PC-3 (cell line): ENCODE measurements at regions of chr14 and their contacts with region 1.

Region 1: GRCh38 chr14:53953002-53953827 is 3.4 kb downstream of the BMP4 start:
- DNase-seq: peak; percentile 88
- ATAC-seq: peak; percentile 75
- H3K4me3 ChIP-seq: peak overlapping the region; percentile 91
- H3K27ac ChIP-seq: peak overlapping the region; percentile 31; the same call in 1 of the 2 replicates
- H3K4me1 ChIP-seq: 0 out of 2 replicates have a peak, but pooled peaks cover 4% of the 10 kb centered on the region
- H3K27me3 ChIP-seq: no peaks in the 10 kb centered on the region
- CTCF ChIP-seq: no peak

Region 2: GRCh38 chr14:53368711-53369191 is 584.5 kb before region 1 on chr14:
- CTCF ChIA-PET with region 1: interaction called, 5 read pairs
- POLR2A ChIA-PET with region 1: interaction called, 14 read pairs
- intact Hi-C with region 1: no loop called
- DNase-seq: peak; percentile 70
- ATAC-seq: peak; percentile 81
- H3K4me3 ChIP-seq: no peak overlapping the region
- H3K27ac ChIP-seq: peak overlapping the region; percentile 14; the same call in 1 of the 2 replicates
- H3K4me1 ChIP-seq: peaks cover 35% of the 10 kb centered on the region
- H3K27me3 ChIP-seq: no peaks in the 10 kb centered on the region
- CTCF ChIP-seq: no peak

Region 3: DNA sequence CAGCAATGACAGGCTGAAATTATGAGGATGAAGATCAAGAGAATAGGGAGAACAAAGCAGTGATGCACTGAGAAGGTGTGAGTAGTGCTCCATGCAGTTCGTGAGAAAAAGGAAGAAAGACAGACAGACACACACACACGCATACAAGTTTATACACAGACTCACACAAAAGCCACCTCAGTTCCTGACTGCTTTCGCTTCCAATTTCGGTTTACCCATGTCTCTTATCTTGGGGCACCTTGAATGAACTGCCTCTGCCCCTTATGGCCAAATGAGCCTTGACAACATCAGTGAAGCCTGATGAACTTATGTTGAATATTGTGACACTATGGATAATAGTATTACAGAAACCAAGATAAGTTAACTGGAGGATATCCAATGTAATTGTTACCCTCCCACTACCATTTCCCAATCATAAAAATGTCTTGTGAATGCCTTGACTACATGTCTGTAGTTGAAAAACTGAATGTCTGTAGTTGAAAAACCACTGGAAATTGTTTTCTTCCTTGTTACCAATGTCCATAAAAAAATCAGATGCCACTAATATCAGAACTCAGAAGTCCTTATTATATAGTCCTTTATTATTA is 419.7 kb before region 1 on chr14:
- CTCF ChIA-PET with region 1: no interaction called
- POLR2A ChIA-PET with region 1: interaction called, 11 read pairs
- intact Hi-C with region 1: no loop called
- DNase-seq: no peak
- ATAC-seq: no peak
- H3K4me3 ChIP-seq: no peak overlapping the region
- H3K27ac ChIP-seq: peak overlapping the region; percentile 94
- H3K4me1 ChIP-seq: peaks cover 35% of the 10 kb centered on the region
- H3K27me3 ChIP-seq: no peaks in the 10 kb centered on the region
- CTCF ChIP-seq: no peak

Region 4: GRCh38 chr14:53569446-53569845 is 383.8 kb before region 1 on chr14:
- CTCF ChIA-PET with region 1: no interaction called
- POLR2A ChIA-PET with region 1: interaction called, 10 read pairs
- intact Hi-C with region 1: no loop called
- DNase-seq: no peak
- ATAC-seq: no peak
- H3K4me3 ChIP-seq: no peak overlapping the region
- H3K27ac ChIP-seq: no peak overlapping the region
- H3K4me1 ChIP-seq: no peaks in the 10 kb centered on the region
- H3K27me3 ChIP-seq: no peaks in the 10 kb centered on the region
- CTCF ChIP-seq: no peak

Region 5: DNA sequence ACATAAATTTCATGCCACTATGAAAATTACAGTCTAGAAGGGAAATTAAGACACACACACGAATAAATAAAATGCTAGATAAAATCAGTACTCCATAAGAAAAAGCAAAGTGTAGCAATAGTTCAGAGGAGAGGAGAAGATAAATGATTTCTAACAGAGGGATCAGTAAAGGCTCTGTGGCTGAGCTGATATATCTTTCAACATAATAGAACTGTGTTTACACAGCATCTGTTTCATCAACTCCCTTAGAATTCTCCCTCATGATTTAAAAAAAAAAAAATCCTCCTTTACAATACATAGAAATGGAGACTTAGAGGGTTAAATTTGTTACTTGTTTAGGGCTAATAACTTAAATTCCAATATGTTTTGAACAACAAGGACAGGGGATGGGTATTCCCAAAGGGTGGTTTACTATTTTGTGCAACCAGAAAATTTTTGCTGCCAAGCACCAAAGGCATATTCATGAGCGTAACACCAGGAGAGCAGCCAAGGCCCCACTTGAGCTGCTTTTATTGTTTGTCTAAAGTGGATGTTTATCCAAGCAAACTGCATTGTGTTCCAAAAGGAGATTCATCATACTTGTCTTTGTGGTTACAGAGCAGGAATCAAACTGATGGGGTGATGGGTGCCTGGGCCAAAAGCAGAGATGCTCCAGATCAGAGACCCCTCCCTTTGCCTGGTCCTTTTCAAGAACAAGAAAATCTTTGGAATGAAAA is 159.3 kb before region 1 on chr14:
- CTCF ChIA-PET with region 1: no interaction called
- POLR2A ChIA-PET with region 1: no interaction called
- intact Hi-C with region 1: loop called (anchors 5 kb)
- DNase-seq: peak; percentile 55
- ATAC-seq: peak; percentile 95
- H3K4me3 ChIP-seq: no peak overlapping the region
- H3K27ac ChIP-seq: no peak overlapping the region
- H3K4me1 ChIP-seq: peaks cover 8% of the 10 kb centered on the region; the same call in 1 of the 2 replicates
- H3K27me3 ChIP-seq: no peaks in the 10 kb centered on the region
- CTCF ChIP-seq: no peak

Region 6: GRCh38 chr14:53943048-53943750 is 10.0 kb before region 1 on chr14:
- CTCF ChIA-PET with region 1: interaction called, 17 read pairs
- POLR2A ChIA-PET with region 1: interaction called, 15 read pairs
- intact Hi-C with region 1: no loop called
- DNase-seq: peak; percentile 53
- ATAC-seq: peak; percentile 84
- H3K4me3 ChIP-seq: no peak overlapping the region; the same call in 1 of the 2 replicates
- H3K27ac ChIP-seq: peak overlapping the region; percentile 38
- H3K4me1 ChIP-seq: peaks cover 25% of the 10 kb centered on the region
- H3K27me3 ChIP-seq: no peaks in the 10 kb centered on the region
- CTCF ChIP-seq: no peak

Region 7: DNA sequence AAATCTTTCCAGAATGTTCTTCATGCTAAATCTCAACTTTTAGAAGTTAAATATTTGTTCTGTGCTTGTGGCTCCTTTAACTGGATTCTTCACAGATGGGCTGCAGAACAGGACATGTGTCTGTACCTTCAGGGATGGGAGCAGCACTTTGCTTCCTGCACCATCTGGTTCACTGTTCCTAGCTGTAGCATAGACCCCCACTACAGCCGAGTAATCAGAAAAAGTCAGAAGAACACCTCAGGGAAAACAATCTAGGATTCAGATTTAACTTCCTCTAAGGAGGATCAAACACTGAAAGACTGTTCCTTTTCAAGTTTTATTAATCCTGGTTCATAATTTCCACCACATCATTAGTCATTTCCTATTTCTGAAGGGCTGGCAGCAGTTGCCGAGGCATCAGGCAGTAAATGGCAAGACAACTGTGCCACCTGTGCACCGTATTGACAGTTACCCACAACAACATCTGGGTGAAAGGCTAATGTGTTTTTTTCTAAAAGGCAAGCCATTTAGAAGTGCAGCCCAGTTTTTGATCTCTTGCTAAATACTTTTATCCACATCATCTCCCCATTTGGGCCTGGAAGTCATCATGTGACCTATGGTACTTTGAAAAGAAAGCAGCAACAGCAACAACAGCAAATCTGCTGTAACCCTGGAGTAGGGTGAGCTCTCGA is 216.2 kb after region 1 on chr14:
- CTCF ChIA-PET with region 1: interaction called, 3 read pairs
- POLR2A ChIA-PET with region 1: no interaction called
- intact Hi-C with region 1: loop called (anchors 1 kb)
- DNase-seq: peak; percentile 100
- ATAC-seq: peak; percentile 85
- H3K4me3 ChIP-seq: peak overlapping the region; percentile 8; the same call in 1 of the 2 replicates
- H3K27ac ChIP-seq: peak overlapping the region; percentile 86
- H3K4me1 ChIP-seq: peaks cover 76% of the 10 kb centered on the region
- H3K27me3 ChIP-seq: no peaks in the 10 kb centered on the region
- CTCF ChIP-seq: peak; percentile 31; the same call in 1 of the 2 replicates

Region 8: DNA sequence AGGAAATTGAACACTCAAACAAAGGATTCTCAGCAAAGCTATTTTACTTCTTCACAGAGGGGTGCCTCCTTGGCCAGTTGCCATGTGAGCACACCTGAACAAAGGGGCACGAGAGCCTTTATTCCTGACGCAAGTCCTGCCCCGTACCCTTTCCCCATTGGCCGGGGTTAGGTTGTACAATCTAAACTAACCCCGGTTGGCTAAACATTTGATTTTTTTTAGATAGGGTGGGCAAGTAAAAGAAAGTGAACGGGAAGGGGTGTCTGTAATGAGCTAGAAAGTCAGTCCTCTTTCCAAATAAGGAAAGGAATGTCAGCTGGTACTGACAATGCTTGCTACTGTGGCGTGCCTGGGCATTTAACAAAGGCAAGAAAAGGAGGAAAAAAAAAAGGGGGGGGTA is 308.1 kb after region 1 on chr14:
- CTCF ChIA-PET with region 1: no interaction called
- POLR2A ChIA-PET with region 1: no interaction called
- intact Hi-C with region 1: no loop called
- DNase-seq: no peak
- ATAC-seq: no peak
- H3K4me3 ChIP-seq: no peak overlapping the region
- H3K27ac ChIP-seq: no peak overlapping the region
- H3K4me1 ChIP-seq: no peaks in the 10 kb centered on the region
- H3K27me3 ChIP-seq: no peaks in the 10 kb centered on the region
- CTCF ChIP-seq: no peak

Region 9: DNA sequence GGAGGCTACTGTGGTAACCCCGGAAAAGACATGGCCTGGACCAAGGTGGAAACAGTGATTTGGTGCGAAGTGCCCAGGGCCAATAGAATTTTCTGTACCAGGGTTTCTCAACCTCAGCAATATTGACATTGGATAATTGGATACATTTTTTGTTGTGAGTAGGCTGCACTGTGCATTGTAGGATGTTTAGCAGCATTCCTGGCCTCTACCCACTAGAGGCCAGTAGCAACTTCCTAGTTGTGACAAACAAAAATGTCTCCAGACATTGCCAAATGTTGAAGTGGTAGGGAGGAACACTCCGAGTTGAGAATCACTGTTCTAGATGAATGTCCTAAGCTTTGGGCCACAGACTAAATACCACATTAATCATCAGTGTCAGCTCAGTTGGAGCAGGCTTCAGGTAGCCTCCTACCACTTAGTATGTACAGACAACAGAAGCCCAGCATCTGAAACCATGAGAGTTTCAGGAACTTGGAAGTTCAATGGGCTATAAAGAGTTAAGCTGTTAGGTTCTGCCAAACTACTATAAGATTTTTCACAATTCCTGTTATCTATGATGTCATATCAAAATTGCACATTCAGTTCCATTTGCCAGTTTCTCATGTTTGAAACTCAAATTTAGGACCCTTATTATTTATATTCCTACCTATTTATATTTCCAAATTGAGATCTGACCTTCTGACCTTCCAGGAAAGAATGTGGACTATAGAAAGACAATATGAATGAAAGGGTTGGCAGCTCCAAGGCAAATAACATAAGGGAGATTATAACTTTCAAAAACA is 550.5 kb after region 1 on chr14:
- CTCF ChIA-PET with region 1: no interaction called
- POLR2A ChIA-PET with region 1: no interaction called
- intact Hi-C with region 1: no loop called
- DNase-seq: peak; percentile 88
- ATAC-seq: peak; percentile 95
- H3K4me3 ChIP-seq: no peak overlapping the region
- H3K27ac ChIP-seq: no peak overlapping the region
- H3K4me1 ChIP-seq: 0 out of 2 replicates have a peak, but pooled peaks cover 4% of the 10 kb centered on the region
- H3K27me3 ChIP-seq: no peaks in the 10 kb centered on the region
- CTCF ChIP-seq: peak; percentile 92